Activated CD4-positive, alpha-beta memory T cell treated with anti-CD3 and anti-CD28 coated beads for 36 hours (primary cell): ENCODE measurements at regions of chr1 and their contacts with region 1.

Region 1: DNA sequence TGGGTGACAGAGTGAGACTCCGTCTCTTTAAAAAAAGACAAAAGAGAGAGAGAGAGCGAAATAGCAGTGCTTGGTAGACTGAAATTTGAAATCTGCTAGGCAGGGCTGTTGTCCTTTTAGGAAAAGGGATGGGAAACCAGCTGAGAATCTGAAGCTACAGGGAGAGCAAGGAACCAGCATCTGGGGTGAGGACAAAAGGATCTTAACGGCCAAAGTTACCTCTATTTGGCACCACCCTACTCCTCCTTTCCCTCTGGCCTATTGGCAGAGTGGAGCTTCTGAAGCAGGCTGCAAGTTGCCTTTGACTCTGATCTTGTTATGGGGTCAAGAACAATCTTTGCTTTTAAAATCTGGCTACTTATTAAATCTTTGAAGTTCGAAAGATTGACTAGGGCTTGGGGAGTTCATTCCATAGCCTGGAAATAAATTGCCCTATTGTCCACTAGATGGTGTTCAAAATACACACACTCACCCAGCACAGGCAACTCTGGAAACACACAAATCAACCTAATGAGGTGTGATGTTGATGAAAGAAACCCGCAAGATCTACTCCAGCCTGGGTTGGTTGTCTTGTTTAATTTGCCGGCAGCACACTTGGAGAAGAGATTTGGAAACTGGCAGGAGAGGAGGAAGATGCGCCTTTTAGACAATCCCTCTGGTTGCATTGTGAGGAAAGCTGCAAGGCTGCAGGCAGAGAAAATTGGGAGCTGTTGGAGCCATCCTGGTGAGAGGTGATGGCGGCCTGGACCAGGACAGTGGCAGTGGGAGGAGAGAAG is 16.5 kb upstream of the PARP1 start:
- DNase-seq: no peak
- H3K4me3 Mint-ChIP-seq: no peak overlapping the region
- H3K27ac Mint-ChIP-seq: no peak overlapping the region
- H3K4me1 Mint-ChIP-seq: peaks cover 14% of the 10 kb centered on the region
- H3K27me3 Mint-ChIP-seq: no peaks in the 10 kb centered on the region

Region 2: GRCh38 chr1:226444901-226445300 is 20.5 kb after region 1 on chr1:
- CTCF ChIA-PET with region 1: interaction called, 9 read pairs
- POLR2A ChIA-PET with region 1: interaction called, 4 read pairs
- intact Hi-C with region 1: loop called (anchors 1 kb)
- DNase-seq: peak; percentile 81
- H3K4me3 Mint-ChIP-seq: no peak overlapping the region
- H3K27ac Mint-ChIP-seq: peak overlapping the region; percentile 6
- H3K4me1 Mint-ChIP-seq: peaks cover 32% of the 10 kb centered on the region
- H3K27me3 Mint-ChIP-seq: no peaks in the 10 kb centered on the region

Region 3: DNA sequence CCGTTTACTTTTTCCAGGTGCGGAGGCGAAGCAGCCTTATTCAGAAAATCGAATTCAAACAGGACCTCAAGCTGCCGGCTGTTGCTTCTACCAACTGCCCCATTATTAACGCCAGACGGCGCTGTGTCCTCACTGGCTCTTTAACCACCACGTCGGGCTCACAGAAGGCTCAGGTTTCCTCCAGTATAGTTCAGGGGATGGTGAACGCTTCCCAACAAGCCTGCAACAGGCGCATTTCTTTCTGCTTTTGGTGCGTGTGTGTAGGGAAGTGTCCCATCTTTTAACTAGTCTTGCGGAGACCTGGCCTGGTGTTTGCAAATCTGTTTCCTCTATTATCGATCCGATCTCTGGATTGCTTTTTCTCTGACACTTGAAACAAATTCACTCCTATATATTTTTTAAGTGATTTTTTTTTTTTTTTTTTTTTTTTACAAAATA is 123.4 kb after region 1 on chr1:
- CTCF ChIA-PET with region 1: interaction called, 5 read pairs
- POLR2A ChIA-PET with region 1: no interaction called
- intact Hi-C with region 1: loop called (anchors 5 kb)
- DNase-seq: peak; percentile 75
- H3K4me3 Mint-ChIP-seq: peak overlapping the region; percentile 38
- H3K27ac Mint-ChIP-seq: no peak overlapping the region
- H3K4me1 Mint-ChIP-seq: peaks cover 14% of the 10 kb centered on the region
- H3K27me3 Mint-ChIP-seq: peaks cover 35% of the 10 kb centered on the region

Region 4: DNA sequence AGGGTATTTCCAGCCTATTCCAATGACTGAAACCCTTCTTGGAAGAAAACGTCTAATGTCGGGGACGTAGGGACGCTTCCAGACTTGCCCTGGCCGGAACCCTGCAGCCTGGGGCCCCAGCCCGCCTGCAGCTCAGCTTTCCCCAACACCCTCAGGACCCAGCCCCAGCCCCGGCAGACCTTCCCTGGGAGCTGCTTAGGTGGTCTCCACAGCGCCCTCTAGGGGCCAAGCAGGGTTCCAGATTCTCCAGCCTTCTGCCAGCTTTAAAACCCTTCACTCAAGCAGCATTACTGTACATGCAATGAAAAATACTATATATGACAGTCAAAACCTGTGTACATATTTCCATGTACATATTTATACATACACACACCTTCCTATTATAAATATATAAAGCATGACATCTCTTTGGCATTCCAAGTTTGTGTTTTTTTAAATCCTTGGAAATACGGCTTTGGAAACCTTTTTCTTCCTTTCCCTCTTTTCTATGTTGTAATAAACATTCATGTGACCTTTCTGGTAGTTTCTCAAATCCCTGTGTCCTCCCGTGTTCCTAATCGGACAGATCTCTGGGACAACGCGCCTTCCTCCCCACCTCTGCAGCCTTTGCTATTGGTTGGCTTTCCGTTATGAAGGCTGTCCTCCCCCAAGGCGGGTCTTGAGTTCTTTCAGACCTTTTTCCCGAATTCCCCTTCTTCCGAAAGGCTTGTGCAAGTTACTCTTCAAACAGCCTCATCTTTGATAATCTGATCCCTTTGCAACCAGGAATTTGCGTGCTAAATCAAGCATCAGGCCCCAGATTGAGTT is 184.5 kb after region 1 on chr1:
- CTCF ChIA-PET with region 1: interaction called, 9 read pairs
- POLR2A ChIA-PET with region 1: no interaction called
- intact Hi-C with region 1: loop called (anchors 1 kb)
- DNase-seq: peak; percentile 78
- H3K4me3 Mint-ChIP-seq: no peak overlapping the region
- H3K27ac Mint-ChIP-seq: no peak overlapping the region
- H3K4me1 Mint-ChIP-seq: no peaks in the 10 kb centered on the region
- H3K27me3 Mint-ChIP-seq: no peaks in the 10 kb centered on the region